Naive thymus-derived CD4-positive, alpha-beta T cell (primary cell): ENCODE measurements at regions of chr3 and their contacts with region 1.

Region 1: GRCh38 chr3:51384726-51385473 is at the start of gene MANF:
- DNase-seq: peak; percentile 87 to 98 (median 98)
- ATAC-seq: peak; percentile 97
- H3K4me3 ChIP-seq: peak within 1 kb of the TSS; percentile 92
- H3K4me3 Mint-ChIP-seq: peak within 1 kb of the TSS; percentile 89 to 99 (median 98)
- H3K27ac ChIP-seq: peak within 1 kb of the TSS; percentile 98
- H3K27ac Mint-ChIP-seq: peak within 1 kb of the TSS; percentile 98 to 99 (median 99)
- H3K4me1 ChIP-seq: peaks cover 22 to 31% of the 10 kb centered on the region in 2 donors
- H3K4me1 Mint-ChIP-seq: peaks cover 32 to 48% (median 46%) of the 10 kb centered on the region in 7 donors
- H3K27me3 ChIP-seq: no peaks in the 10 kb centered on the region
- H3K27me3 Mint-ChIP-seq: no peaks in the 10 kb centered on the region
- total RNA-seq, gene MANF: 28.2 to 182 (median 68.0) TPM

Region 2: GRCh38 chr3:50292159-50293078 is 1092.5 kb before region 1 on chr3 and contains the start of gene IFRD2:
- CTCF ChIA-PET with region 1: no interaction called
- POLR2A ChIA-PET with region 1: no interaction called
- intact Hi-C with region 1: loop called in 1 of 2 experiments (anchors 2 kb)
- DNase-seq: peak; percentile 81 to 97 (median 94)
- ATAC-seq: peak; percentile 99
- H3K4me3 ChIP-seq: peak within 1 kb of the TSS; percentile 62
- H3K4me3 Mint-ChIP-seq: peak within 1 kb of the TSS; percentile 81 to 99 (median 88)
- H3K27ac ChIP-seq: peak within 1 kb of the TSS; percentile 79
- H3K27ac Mint-ChIP-seq: peak within 1 kb of the TSS; percentile 85 to 97 (median 93)
- H3K4me1 ChIP-seq: peaks cover 13 to 16% of the 10 kb centered on the region in 2 donors
- H3K4me1 Mint-ChIP-seq: peaks cover 16 to 22% (median 19%) of the 10 kb centered on the region in 7 donors
- H3K27me3 ChIP-seq: no peaks in the 10 kb centered on the region
- H3K27me3 Mint-ChIP-seq: no peaks in the 10 kb centered on the region
- total RNA-seq, gene IFRD2: 53.7 to 85.1 (median 64.7) TPM

Region 3: DNA sequence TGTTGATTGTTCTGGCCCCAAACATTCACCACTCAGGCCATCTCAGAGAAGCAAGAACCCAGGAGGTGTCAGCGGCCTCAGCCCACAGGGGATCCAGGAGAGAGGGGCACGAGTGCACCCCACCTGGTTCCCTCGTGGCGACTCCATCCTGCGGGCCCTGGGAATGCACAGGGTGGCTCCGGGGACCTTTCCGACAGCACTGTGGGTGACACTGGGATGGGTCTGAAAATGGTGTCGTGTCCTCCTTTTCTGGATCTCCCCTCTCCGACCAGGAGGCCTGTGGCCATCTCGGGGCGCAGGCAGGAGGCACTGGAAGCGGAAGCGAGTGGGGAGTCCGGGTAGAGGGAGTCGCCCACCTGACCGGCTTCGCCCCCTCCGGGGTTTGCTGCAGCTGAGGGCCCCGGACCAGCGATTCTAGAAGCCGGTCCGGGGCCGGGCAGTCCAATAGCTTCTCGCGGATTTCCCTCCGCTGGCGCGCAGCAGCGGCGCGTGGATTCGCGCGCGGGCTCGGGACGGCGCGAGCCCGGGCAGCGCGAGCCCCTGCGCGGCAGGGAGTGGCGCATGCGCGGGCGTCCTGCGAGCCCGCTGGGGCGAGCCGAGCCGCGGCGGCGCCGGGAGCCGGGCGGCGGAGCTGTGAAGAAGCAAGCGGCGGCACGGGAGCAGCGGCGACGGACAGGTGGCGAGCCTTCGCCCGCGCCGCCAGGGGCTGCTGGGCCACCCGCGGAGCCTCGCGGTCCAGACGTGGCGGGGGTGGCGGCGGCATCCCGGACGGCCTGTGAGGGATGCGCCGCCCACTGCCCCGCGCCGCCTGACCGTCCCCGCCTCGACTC is 710.3 kb before region 1 on chr3 and contains the start of gene DOCK3:
- CTCF ChIA-PET with region 1: no interaction called
- POLR2A ChIA-PET with region 1: no interaction called
- intact Hi-C with region 1: loop called in 1 of 2 experiments (anchors 5 kb)
- DNase-seq: peak; percentile 30 to 77 (median 69)
- ATAC-seq: peak; percentile 92
- H3K4me3 ChIP-seq: peak within 1 kb of the TSS; percentile 63
- H3K4me3 Mint-ChIP-seq: peak within 1 kb of the TSS; percentile 71 to 87 (median 81)
- H3K27ac ChIP-seq: no peak within 1 kb of the TSS
- H3K27ac Mint-ChIP-seq: peak within 1 kb of the TSS in 4 of 9 donors; percentile 4 to 58 (median 40)
- H3K4me1 ChIP-seq: no peaks in the 10 kb centered on the region
- H3K4me1 Mint-ChIP-seq: peaks cover 4 to 10% (median 6%) of the 10 kb centered on the region in 7 donors
- H3K27me3 ChIP-seq: peaks cover 0 to 3% of the 10 kb centered on the region in 2 donors
- H3K27me3 Mint-ChIP-seq: peaks cover 17 to 65% (median 32%) of the 10 kb centered on the region in 5 donors
- total RNA-seq, gene DOCK3: 1.5 to 2.9 (median 1.9) TPM

Region 4: DNA sequence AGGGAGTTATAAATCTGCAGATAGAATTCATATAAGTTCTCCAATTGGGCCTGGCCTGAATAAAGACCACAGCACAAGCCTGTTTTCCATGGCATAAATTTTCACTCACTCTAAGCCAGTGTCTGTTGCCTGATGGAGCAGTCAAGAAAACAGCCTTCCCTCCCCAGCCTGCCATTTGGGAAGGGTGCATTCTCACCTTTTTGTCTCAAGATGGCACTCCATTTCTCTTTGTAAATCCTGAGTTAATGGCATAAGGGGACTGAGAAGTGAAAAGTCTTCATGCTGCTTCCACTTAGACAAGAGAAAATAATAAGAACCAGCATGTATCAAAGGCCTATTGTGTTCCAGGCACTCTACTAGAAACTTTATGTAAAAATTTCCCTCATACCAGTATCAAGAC is 115.4 kb before region 1 on chr3:
- CTCF ChIA-PET with region 1: interaction called, 3 read pairs
- POLR2A ChIA-PET with region 1: interaction called, 3 read pairs
- intact Hi-C with region 1: loop called in 1 of 2 experiments (anchors 5 kb)
- DNase-seq: no peak
- ATAC-seq: no peak
- H3K4me3 ChIP-seq: no peak overlapping the region
- H3K4me3 Mint-ChIP-seq: peak overlapping the region in 5 of 10 donors; percentile 2 to 80 (median 21)
- H3K27ac ChIP-seq: no peak overlapping the region
- H3K27ac Mint-ChIP-seq: peak overlapping the region in 6 of 9 donors; percentile 45 to 99 (median 96)
- H3K4me1 ChIP-seq: peaks cover 6 to 32% of the 10 kb centered on the region in 2 donors
- H3K4me1 Mint-ChIP-seq: peaks cover 10 to 59% (median 51%) of the 10 kb centered on the region in 7 donors
- H3K27me3 ChIP-seq: no peaks in the 10 kb centered on the region
- H3K27me3 Mint-ChIP-seq: no peaks in the 10 kb centered on the region

Region 5: DNA sequence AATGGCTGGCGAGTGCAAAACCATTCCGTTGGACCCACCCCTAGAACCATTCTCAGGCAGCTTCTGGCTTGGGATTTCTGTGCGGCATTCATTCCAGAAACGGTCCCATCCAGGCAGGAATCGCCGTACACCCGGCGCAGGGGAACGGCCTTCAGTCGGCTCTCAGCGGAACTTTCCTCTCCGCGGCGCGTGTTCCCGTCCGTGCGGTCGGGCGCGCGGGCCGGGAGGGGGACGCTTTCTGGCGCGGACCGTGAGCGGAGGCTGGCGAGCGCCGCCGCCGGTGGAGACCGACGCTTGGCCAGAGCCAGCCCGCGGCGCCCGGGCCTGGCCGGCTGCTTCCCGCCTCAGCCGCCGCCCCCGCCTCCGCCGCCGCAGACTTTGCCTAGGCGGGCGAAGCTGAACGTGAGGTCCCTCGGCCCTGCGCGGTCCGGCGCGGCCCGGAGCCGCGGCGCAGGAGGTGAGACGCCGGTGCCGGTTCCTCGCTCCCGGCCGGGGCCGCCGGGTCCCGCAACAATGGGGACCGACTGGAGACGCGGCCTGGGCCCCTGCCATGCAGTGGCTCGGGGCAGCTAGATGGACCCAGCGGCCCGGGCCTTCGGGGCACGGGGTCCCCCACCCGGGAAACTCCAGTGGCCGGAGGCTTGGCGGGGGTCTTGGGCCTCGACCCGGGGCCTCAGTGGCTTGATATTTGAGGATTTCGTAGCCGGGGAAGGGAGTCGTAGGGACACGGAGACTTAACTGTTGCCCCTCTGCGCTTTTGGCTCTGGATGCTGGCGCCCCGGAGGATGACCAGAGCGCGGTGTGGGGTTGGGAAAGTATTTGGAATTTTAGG is 153.8 kb after region 1 on chr3 and contains the start of gene RAD54L2:
- CTCF ChIA-PET with region 1: no interaction called
- POLR2A ChIA-PET with region 1: no interaction called
- intact Hi-C with region 1: loop called in 1 of 2 experiments (anchors 1 kb)
- DNase-seq: peak; percentile 49 to 87 (median 69)
- ATAC-seq: peak; percentile 96
- H3K4me3 ChIP-seq: peak within 1 kb of the TSS; percentile 68
- H3K4me3 Mint-ChIP-seq: peak within 1 kb of the TSS; percentile 93 to 96 (median 94)
- H3K27ac ChIP-seq: peak within 1 kb of the TSS; percentile 80
- H3K27ac Mint-ChIP-seq: peak within 1 kb of the TSS; percentile 88 to 96 (median 92)
- H3K4me1 ChIP-seq: peaks cover 11 to 18% of the 10 kb centered on the region in 2 donors
- H3K4me1 Mint-ChIP-seq: peaks cover 21 to 57% (median 43%) of the 10 kb centered on the region in 7 donors
- H3K27me3 ChIP-seq: no peaks in the 10 kb centered on the region
- H3K27me3 Mint-ChIP-seq: no peaks in the 10 kb centered on the region
- total RNA-seq, gene RAD54L2: 38.1 to 45.2 (median 40.1) TPM